Vagina (tissue), 2 donors: ENCODE measurements at regions of chr6 and their contacts with region 1.

Region 1: DNA sequence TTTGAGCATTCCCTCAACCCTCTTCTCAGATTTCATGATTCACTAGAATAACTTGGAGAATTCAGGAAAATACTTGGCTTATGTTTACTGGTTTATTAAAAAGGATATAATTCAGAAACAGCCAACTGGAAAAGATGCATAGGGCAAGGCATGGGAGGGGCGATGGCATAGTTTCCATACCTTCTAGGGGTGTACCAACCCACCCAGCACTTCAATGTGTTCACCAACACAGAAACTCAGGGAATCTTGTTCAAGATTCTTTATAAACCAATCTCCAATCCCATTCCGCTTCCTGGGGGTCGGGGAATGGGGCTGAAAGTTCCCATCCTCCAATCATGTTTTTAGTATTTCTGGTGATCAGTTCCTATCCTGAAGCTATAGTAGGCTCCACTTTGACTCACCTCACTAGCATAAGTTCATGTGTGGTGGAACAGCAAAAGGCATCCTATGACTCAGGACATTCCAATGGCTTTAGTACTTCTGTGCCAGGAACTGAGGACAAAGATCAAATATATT is 164.4 kb downstream of the SIM1 start:
- DNase-seq: no peak
- H3K4me3 ChIP-seq: no peak overlapping the region
- H3K27ac ChIP-seq: no peak overlapping the region
- H3K4me1 ChIP-seq: no peaks in the 10 kb centered on the region
- H3K27me3 ChIP-seq: no peaks in the 10 kb centered on the region
- CTCF ChIP-seq: no peak
- POLR2A ChIP-seq: no peak

Region 2: GRCh38 chr6:99016355-99016754 is 1283.9 kb before region 1 on chr6:
- intact Hi-C with region 1: no loop called
- DNase-seq: no peak
- H3K4me3 ChIP-seq: no peak overlapping the region
- H3K27ac ChIP-seq: no peak overlapping the region
- H3K4me1 ChIP-seq: no peaks in the 10 kb centered on the region
- H3K27me3 ChIP-seq: no peaks in the 10 kb centered on the region
- CTCF ChIP-seq: no peak
- POLR2A ChIP-seq: no peak

Region 3: GRCh38 chr6:100152201-100152600 is 148.1 kb before region 1 on chr6:
- intact Hi-C with region 1: no loop called
- DNase-seq: no peak
- H3K4me3 ChIP-seq: no peak overlapping the region
- H3K27ac ChIP-seq: no peak overlapping the region
- H3K4me1 ChIP-seq: no peaks in the 10 kb centered on the region
- H3K27me3 ChIP-seq: no peaks in the 10 kb centered on the region
- CTCF ChIP-seq: no peak
- POLR2A ChIP-seq: no peak

Region 4: DNA sequence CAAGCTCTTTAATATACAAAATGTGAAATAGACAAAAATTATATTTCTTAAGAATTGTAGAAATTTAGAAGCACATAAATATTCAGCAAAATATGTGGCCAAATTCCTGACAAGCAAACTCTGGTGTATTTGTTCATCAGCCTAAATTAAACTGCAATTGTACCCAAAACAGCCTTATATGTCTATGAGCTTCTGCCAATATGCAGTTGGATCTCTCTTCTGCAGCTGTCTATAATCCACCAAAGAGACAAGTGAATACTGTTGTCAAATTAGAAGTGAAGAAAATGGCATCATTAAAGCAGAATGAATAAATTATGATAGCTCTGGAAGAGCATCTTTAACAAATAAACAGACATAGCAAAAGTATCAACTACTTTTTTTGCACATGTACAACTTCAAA is 1848.9 kb after region 1 on chr6:
- intact Hi-C with region 1: loop called (anchors 5 kb)
- DNase-seq: no peak
- H3K4me3 ChIP-seq: no peak overlapping the region
- H3K27ac ChIP-seq: no peak overlapping the region
- H3K4me1 ChIP-seq: no peaks in the 10 kb centered on the region
- H3K27me3 ChIP-seq: no peaks in the 10 kb centered on the region
- CTCF ChIP-seq: no peak
- POLR2A ChIP-seq: no peak